GM12878 (cell line): ENCODE measurements at regions of chr11 and their contacts with region 1.

Region 1: DNA sequence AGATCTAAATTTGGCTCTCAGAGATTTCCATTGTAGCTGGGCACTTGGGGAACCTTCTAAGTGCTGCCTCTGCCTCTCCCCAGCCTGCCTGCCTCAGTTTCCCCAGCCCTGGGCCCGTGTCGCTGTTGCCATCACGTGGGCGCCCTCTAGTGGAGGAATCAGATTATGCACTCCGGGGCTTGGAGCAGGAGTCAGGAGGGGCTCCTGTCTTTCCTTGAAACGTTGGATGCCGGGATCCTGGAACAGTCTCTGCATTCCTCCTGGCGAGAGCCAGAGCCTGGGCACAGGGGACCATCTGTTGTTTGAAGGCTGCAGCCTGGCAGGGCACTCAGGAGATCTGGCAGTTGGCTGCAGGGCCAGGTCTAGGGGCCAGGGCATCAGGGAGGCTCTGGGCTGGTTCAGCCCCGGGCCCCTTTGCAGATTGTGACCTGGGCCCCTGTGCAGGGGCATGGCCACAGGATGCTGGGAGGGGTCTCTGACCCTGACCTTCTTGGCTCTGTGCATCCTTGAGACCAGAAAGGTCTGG is 71.6 kb downstream of the LRP5 start:
- DNase-seq: no peak
- ATAC-seq: peak; percentile 69
- H3K4me3 ChIP-seq: no peak overlapping the region
- H3K27ac ChIP-seq: no peak overlapping the region
- H3K4me1 ChIP-seq: peaks cover 32% of the 10 kb centered on the region
- H3K27me3 ChIP-seq: no peaks in the 10 kb centered on the region
- CTCF ChIP-seq: peak; percentile 86 to 97 (median 96)
- EP300 ChIP-seq: no peak
- POLR2A ChIP-seq: no peak
- RAD21 ChIP-seq: peak; percentile 96

Region 2: DNA sequence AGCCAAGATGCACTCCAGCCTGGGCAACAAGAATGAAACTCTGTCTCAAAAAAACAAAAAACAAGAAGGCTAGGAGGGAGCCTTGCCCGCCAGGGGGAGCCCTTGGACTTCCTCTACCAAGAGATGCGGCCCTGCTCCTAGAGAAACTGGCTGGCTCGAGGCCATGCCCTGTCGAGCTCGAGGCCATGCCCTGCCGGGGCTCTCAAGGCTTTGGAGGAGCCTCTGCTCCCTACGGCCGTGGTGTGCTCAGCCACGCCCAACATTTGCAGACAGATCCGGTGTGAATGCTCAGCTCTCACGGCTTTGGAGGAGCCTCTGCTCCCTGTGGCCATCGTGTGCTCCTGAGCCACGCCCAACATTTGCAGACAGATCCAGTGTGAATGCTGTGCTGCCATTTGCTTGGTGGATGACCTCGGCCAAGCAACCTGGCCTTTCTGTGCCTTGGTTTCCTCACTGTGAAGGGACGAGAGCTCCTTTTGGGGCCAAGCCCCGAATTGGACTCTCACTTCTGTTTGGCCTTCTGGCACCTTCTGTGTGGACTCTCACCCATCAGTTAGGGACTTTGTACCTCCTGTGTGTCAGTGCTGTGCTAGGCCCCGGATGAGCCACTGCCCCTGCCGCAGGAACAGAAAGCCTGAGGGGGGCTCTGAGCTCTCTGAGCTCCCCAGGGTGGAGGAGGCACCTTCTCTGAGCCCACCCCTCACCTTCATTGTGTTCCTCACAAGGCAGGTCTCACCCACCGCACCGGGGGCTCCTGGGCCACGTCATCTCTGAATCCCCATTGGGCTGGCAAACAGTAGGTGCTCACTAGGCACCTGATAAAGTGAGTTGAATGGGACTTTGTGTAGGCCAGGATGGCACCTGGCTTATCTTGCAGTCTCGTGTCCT is 126.3 kb before region 1 on chr11:
- CTCF ChIA-PET with region 1: interaction called, 14 read pairs
- POLR2A ChIA-PET with region 1: no interaction called
- RAD21 ChIA-PET with region 1: interaction called, 21 read pairs
- SMC1A ChIA-PET with region 1: interaction called, 8 read pairs
- in situ Hi-C with region 1: loop called (anchors 5 kb)
- intact Hi-C with region 1: loop called (anchors 1 kb)
- DNase-seq: no peak
- ATAC-seq: peak; percentile 99
- H3K4me3 ChIP-seq: no peak overlapping the region
- H3K27ac ChIP-seq: no peak overlapping the region
- H3K4me1 ChIP-seq: peaks cover 4% of the 10 kb centered on the region
- H3K27me3 ChIP-seq: no peaks in the 10 kb centered on the region; a peak in 1 of 4 replicates
- CTCF ChIP-seq: peak; percentile 74 to 78 (median 77)
- EP300 ChIP-seq: no peak
- POLR2A ChIP-seq: no peak; the same call in 1 of the 2 replicates
- RAD21 ChIP-seq: peak; percentile 97

Region 3: DNA sequence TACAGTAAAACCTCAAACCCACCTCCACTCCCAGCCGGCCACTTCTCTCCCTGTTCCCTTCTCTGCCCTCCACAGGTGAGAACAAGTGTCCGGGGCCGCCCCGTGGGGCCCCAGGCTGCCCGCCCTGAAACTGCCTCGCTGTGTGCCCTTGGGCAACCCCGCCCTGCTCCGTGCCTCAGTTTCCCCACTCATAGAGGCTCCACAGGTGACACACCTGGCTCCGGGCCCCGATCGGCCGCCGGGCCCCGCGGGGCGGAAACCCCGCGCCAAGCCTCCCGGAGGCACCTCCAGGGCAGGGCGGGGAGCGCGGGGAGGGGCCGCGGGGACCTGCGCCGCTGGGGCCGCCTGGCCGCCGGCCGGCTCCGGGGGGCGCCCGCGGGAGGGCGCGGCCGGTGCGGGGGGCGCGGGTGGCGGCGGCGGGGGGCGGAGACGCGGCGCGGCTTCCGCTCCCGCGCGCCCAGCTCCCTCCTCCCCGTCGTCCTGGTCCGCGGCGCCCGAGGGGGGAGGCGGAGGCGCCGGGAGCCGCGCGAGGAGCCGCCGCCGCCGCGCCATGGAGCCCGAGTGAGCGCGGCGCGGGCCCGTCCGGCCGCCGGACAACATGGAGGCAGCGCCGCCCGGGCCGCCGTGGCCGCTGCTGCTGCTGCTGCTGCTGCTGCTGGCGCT is 71.8 kb before region 1 on chr11 and contains the start of gene LRP5:
- CTCF ChIA-PET with region 1: interaction called, 3 read pairs
- POLR2A ChIA-PET with region 1: no interaction called
- RAD21 ChIA-PET with region 1: interaction called, 8 read pairs
- SMC1A ChIA-PET with region 1: interaction called, 3 read pairs
- in situ Hi-C with region 1: no loop called
- intact Hi-C with region 1: loop called (anchors 5 kb)
- DNase-seq: no peak
- ATAC-seq: peak; percentile 52
- H3K4me3 ChIP-seq: peak within 1 kb of the TSS; percentile 92
- H3K27ac ChIP-seq: peak within 1 kb of the TSS; percentile 36
- H3K4me1 ChIP-seq: peaks cover 6% of the 10 kb centered on the region
- H3K27me3 ChIP-seq: no peaks in the 10 kb centered on the region
- CTCF ChIP-seq: no peak
- EP300 ChIP-seq: no peak
- POLR2A ChIP-seq: 0 out of 2 replicates have a peak, but pooled peaks have one; percentile 27
- RAD21 ChIP-seq: no peak
- polyA plus RNA-seq, gene LRP5: 0.37 to 0.97 TPM

Region 4: DNA sequence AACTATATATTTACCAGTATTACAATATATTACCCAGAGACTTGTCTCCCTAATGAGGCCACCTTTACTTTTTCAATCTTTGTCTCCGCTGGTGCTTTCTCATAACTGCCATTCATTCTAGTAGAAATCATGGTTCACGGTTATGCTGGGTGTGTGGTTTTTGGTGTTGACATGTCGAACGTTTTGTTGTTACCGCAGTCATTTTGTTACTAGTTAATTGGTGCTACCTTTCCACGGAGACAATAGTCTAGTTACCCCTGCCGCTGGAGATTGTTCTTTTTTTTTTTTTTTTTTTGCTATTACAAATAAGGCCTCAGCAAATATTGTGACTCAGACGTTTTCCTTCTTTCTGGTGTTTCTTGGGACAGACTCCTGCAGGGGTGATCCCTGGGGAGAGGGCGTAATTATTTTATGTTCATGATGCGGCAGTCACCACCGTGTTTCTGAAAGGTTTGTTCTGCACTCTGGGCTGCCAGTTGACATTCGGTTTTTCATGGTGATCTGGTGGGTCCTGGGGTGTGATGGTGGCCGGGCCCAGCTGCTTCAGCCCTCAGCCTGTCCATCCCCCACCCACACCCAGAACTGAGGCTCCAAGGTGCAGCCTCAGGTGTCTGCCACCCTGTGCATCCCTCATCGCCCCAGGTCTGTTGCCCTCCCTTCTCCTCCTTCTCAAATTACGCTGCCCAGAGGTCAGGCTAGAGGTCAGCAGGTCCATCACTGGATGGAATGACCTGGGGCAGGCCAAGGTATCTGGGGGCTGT is 43.1 kb before region 1 on chr11:
- CTCF ChIA-PET with region 1: no interaction called
- POLR2A ChIA-PET with region 1: no interaction called
- RAD21 ChIA-PET with region 1: no interaction called
- SMC1A ChIA-PET with region 1: interaction called, 3 read pairs
- in situ Hi-C with region 1: no loop called
- intact Hi-C with region 1: loop called (anchors 1 kb)
- DNase-seq: peak; percentile 54
- ATAC-seq: peak; percentile 78
- H3K4me3 ChIP-seq: no peak overlapping the region
- H3K27ac ChIP-seq: no peak overlapping the region
- H3K4me1 ChIP-seq: peaks cover 12% of the 10 kb centered on the region
- H3K27me3 ChIP-seq: no peaks in the 10 kb centered on the region
- CTCF ChIP-seq: no peak
- EP300 ChIP-seq: peak; percentile 20 to 66; a peak in 2 of 4 replicates
- POLR2A ChIP-seq: no peak
- RAD21 ChIP-seq: no peak

Region 5: GRCh38 chr11:68370211-68371111 is 13.6 kb before region 1 on chr11:
- CTCF ChIA-PET with region 1: interaction called, 10 read pairs
- POLR2A ChIA-PET with region 1: interaction called, 5 read pairs
- RAD21 ChIA-PET with region 1: interaction called, 4 read pairs
- SMC1A ChIA-PET with region 1: interaction called, 4 read pairs
- in situ Hi-C with region 1: no loop called
- intact Hi-C with region 1: no loop called
- DNase-seq: peak; percentile 89
- ATAC-seq: peak; percentile 91
- H3K4me3 ChIP-seq: peak overlapping the region; percentile 34; the same call in 1 of the 2 replicates
- H3K27ac ChIP-seq: peak overlapping the region; percentile 89
- H3K4me1 ChIP-seq: peaks cover 33% of the 10 kb centered on the region
- H3K27me3 ChIP-seq: no peaks in the 10 kb centered on the region
- CTCF ChIP-seq: no peak
- EP300 ChIP-seq: peak; percentile 86 to 90; a peak in 3 of 4 replicates
- POLR2A ChIP-seq: 0 out of 2 replicates have a peak, but pooled peaks have one; percentile 26
- RAD21 ChIP-seq: 0 out of 2 replicates have a peak, but pooled peaks have one; percentile 13

Region 6: GRCh38 chr11:68447015-68447801 is 63.2 kb after region 1 on chr11:
- CTCF ChIA-PET with region 1: no interaction called
- POLR2A ChIA-PET with region 1: no interaction called
- RAD21 ChIA-PET with region 1: no interaction called
- SMC1A ChIA-PET with region 1: no interaction called
- in situ Hi-C with region 1: no loop called
- intact Hi-C with region 1: loop called (anchors 1 kb)
- DNase-seq: no peak
- ATAC-seq: peak; percentile 100
- H3K4me3 ChIP-seq: no peak overlapping the region
- H3K27ac ChIP-seq: no peak overlapping the region
- H3K4me1 ChIP-seq: no peaks in the 10 kb centered on the region
- H3K27me3 ChIP-seq: no peaks in the 10 kb centered on the region
- CTCF ChIP-seq: peak; percentile 90 to 95 (median 91)
- EP300 ChIP-seq: no peak
- POLR2A ChIP-seq: no peak
- RAD21 ChIP-seq: peak; percentile 82